ENCODE measurements at regions of chr6 and their contacts with region 1.

Region 1: DNA sequence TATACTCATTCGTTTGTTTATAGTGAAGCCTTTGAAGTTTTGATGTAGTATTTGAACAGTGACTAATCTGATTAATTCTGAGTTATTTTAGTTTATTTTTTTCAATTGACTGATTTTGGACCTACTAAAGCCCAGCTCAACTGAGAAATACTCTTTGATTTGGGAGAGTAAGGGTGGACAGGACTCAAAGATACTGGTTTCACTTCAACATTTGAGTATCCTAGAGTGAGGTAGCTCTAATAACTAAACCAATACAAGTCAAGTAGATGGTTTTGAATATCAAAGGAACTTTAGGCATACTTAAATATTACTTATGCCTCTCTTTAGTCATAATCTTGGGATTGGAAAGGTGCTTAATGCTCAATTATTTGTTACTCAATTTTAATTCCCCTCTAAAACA is 65.6 kb downstream of the ZNF292 start:
- DNase-seq: no peak
- H3K4me3 ChIP-seq: no peak overlapping the region
- H3K27ac ChIP-seq: no peak overlapping the region
- H3K4me1 ChIP-seq: no peaks in the 10 kb centered on the region
- H3K27me3 ChIP-seq: no peaks in the 10 kb centered on the region
- CTCF ChIP-seq: no peak

Region 2: DNA sequence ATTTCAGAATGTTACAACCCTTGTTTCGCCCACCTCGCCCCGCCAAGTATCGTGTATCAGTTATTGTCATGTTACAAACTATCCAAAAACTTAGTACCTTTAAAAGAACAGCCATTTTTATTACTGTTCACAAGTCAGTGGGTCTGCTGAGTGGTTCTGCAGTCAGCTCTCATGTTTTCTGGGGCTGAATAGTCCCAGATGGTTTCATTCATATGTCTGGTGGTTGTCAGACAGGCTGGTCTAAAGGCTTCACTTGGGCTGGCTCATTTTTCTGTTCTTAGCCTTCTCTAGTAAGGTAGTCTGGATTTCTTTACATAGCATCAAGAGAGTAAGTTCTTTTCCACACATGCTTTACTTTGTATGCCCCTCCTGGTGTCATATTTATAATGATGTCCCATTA is 57.0 kb before region 1 on chr6:
- intact Hi-C with region 1: loop called (anchors 10 kb)
- DNase-seq: no peak
- H3K4me3 ChIP-seq: no peak overlapping the region
- H3K27ac ChIP-seq: no peak overlapping the region
- H3K4me1 ChIP-seq: no peaks in the 10 kb centered on the region
- H3K27me3 ChIP-seq: no peaks in the 10 kb centered on the region
- CTCF ChIP-seq: no peak